Activated T-helper 2 cell treated with anti-CD3 and anti-CD28 coated beads, Interferon-gamma antibody, Interleukin-2, Interleukin-4, amounts not matched to agents 10 μg/mL and 5 μg/mL and 100 μg/mL, durations not matched to agents 14 hours and 24 hours and 36 hours (primary cell): ENCODE measurements at regions of chr3 and their contacts with region 1.

Region 1: DNA sequence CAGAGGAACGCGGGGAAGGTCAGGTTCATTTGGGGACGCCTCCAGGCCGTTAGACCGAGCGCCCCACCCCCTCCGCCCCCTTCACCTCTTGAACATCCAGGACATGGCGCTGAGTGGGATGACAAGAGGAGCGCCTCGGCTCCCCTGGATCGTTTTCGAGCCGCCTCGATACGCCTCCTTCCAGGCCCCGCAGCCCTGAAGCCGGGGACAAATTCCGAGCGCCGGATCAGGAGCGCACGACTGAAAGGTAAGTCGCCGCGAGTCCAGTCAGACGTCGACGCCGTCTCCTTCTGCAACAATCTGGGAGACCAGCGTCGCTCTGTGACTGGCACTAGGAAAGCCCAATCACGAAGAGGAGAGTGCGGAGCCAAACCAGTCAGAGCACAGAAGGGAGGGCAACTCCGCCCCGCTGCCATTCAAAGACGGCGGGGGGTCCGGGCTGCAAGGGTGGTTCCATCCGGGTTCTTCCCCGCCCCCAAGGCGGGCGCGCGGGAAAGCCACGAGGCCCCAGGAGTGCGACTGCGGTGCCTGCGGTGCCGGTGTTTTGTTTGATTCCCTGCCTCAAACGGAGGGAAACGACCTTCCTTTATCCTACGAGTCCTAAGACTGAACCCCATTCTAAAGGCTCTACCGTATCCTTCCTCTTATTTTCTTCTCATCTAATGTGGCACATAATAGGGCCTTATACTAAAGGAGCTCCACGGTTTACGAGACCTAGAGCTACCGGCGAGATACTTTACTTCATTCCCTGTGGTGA is at the start of gene HLTF:
- DNase-seq: peak; percentile 88
- H3K4me3 Mint-ChIP-seq: peak within 1 kb of the TSS; percentile 93
- H3K27ac Mint-ChIP-seq: peak within 1 kb of the TSS; percentile 79
- H3K4me1 Mint-ChIP-seq: peaks cover 27% of the 10 kb centered on the region
- H3K27me3 Mint-ChIP-seq: no peaks in the 10 kb centered on the region
- total RNA-seq, gene HLTF: 20.8 and 23.9 TPM in 2 replicates

Region 2: DNA sequence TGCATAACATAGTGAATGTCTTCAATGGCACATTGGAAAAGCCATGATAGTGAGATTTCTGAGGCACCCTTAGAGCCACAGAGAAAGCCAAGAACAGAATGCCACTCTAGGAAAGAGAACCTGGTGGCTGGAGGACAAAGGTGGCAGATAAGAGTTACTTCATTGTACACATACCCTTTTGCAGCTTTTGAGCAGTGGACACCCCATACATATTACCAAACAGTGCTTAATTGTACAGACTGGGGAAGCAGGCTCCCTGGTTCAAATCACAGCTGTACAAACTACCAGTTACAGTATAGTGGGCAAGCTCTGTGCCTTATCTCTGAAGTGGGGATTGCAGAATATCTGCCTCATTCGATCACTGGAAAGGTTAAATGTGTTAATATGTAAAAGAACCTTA is 105.1 kb before region 1 on chr3:
- intact Hi-C with region 1: no loop called
- DNase-seq: no peak
- H3K4me3 Mint-ChIP-seq: no peak overlapping the region
- H3K27ac Mint-ChIP-seq: no peak overlapping the region
- H3K4me1 Mint-ChIP-seq: no peaks in the 10 kb centered on the region
- H3K27me3 Mint-ChIP-seq: peaks cover 34% of the 10 kb centered on the region

Region 3: DNA sequence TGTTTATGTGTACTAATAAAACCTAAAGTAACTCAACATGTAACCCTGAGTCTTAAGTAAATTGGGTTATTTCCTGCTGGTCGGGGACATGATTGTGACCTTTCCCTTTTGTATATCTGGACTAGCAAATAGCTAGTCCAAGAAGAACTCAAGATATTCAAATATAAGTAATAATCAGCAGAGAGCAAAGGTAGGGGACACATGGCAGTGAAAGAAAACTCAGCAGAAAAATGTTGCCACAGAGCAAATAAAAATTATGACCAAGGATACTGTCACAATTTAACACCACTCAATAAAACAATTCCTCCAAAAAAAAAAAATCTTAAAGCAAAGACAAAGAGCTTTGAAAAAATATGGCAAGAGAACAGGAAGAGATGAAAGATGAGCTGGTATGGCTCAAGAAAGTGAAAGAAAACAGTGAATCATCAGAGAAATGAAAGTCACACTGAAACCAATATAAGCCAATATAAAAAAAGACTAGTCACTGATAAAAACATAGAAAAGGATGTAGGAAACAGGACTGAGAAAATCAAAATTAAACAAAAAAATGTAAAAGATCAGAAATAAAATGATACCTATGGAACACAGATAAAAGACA is 43.5 kb before region 1 on chr3:
- intact Hi-C with region 1: loop called (anchors 2 kb)
- DNase-seq: no peak
- H3K4me3 Mint-ChIP-seq: peak overlapping the region; percentile 28
- H3K27ac Mint-ChIP-seq: peak overlapping the region; percentile 49
- H3K4me1 Mint-ChIP-seq: peaks cover 23% of the 10 kb centered on the region
- H3K27me3 Mint-ChIP-seq: no peaks in the 10 kb centered on the region

Region 4: GRCh38 chr3:149104516-149104915 is 18.1 kb after region 1 on chr3:
- intact Hi-C with region 1: no loop called
- DNase-seq: no peak
- H3K4me3 Mint-ChIP-seq: no peak overlapping the region
- H3K27ac Mint-ChIP-seq: no peak overlapping the region
- H3K4me1 Mint-ChIP-seq: no peaks in the 10 kb centered on the region
- H3K27me3 Mint-ChIP-seq: peaks cover 28% of the 10 kb centered on the region

Region 5: GRCh38 chr3:149129326-149130205 is 43.2 kb after region 1 on chr3 and contains the start of gene HPS3:
- intact Hi-C with region 1: loop called (anchors 1 kb)
- DNase-seq: peak; percentile 81
- H3K4me3 Mint-ChIP-seq: peak within 1 kb of the TSS; percentile 90
- H3K27ac Mint-ChIP-seq: peak within 1 kb of the TSS; percentile 81
- H3K4me1 Mint-ChIP-seq: peaks cover 32% of the 10 kb centered on the region
- H3K27me3 Mint-ChIP-seq: peaks cover 21% of the 10 kb centered on the region
- total RNA-seq, gene HPS3: 20.2 and 24.4 TPM in 2 replicates